ENCODE measurements at regions of chr2 and their contacts with region 1.

Region 1: DNA sequence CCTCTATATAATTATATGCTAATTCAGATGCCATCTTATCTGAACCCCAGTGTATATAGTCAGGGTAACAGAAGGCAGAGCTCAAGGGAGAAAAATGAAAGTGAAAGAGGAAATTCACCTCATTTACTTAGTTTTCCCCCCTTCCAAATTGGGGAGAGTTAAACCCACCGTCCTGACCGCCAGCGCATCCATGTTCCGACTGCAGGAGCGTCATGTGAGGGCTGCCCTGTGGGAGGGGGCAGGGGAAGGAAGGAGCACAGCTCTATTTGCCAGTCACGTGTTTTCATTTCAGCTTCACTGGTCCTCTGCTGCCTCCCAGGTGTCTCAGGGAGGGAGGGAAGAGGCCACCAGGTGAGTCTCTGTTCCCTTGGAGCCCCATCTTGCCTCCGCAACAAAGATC is 13.2 kb downstream of the CNNM4 start:
- DNase-seq: no peak
- H3K4me3 ChIP-seq: no peak overlapping the region
- H3K27ac ChIP-seq: no peak overlapping the region
- H3K4me1 ChIP-seq: no peaks in the 10 kb centered on the region
- H3K27me3 ChIP-seq: no peaks in the 10 kb centered on the region
- CTCF ChIP-seq: no peak

Region 2: GRCh38 chr2:96727431-96727830 is 46.5 kb before region 1 on chr2:
- CTCF ChIA-PET with region 1: no interaction called
- POLR2A ChIA-PET with region 1: interaction called, 10 read pairs
- intact Hi-C with region 1: no loop called
- DNase-seq: no peak
- H3K4me3 ChIP-seq: no peak overlapping the region
- H3K27ac ChIP-seq: no peak overlapping the region
- H3K4me1 ChIP-seq: no peaks in the 10 kb centered on the region
- H3K27me3 ChIP-seq: no peaks in the 10 kb centered on the region
- CTCF ChIP-seq: no peak

Region 3: DNA sequence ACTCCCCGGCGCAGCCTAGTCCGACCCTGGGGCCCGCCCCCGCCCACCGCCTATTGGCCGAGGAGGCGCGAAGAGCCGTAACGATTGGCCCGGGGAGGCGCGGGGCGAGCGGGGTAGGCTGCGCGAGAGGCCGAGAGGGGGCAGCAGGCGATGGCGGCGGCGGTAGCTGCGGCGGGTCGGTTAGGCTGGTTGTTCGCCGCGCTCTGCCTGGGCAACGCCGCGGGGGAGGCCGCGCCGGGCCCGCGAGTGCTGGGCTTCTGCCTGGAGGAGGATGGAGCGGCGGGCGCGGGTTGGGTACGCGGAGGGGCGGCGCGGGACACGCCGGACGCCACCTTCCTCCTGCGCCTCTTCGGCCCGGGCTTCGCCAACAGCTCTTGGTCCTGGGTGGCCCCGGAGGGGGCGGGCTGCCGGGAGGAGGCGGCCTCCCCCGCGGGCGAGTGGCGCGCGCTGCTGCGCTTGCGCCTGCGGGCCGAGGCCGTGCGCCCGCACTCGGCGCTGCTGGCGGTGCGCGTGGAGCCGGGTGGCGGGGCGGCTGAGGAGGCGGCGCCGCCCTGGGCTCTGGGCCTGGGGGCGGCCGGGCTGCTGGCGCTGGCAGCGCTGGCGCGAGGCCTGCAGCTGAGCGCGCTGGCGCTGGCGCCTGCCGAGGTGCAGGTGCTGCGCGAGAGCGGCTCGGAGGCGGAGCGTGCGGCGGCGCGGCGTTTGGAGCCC is 42.4 kb after region 1 on chr2 and contains the start of gene CNNM3:
- CTCF ChIA-PET with region 1: interaction called, 4 read pairs
- POLR2A ChIA-PET with region 1: interaction called, 13 read pairs
- intact Hi-C with region 1: no loop called
- DNase-seq: peak; percentile 97
- H3K4me3 ChIP-seq: peak within 1 kb of the TSS; percentile 83
- H3K27ac ChIP-seq: peak within 1 kb of the TSS; percentile 72
- H3K4me1 ChIP-seq: no peaks in the 10 kb centered on the region
- H3K27me3 ChIP-seq: no peaks in the 10 kb centered on the region
- CTCF ChIP-seq: peak; percentile 52
- total RNA-seq, gene CNNM3: 20.3 and 20.9 TPM in 2 replicates

Measured in A673 (cell line).